GM12878 (cell line): ENCODE measurements at regions of chr1 and their contacts with region 1.

Region 1: GRCh38 chr1:154870115-154870571 is at the start of gene KCNN3:
- DNase-seq: peak; percentile 82
- ATAC-seq: peak; percentile 89
- H3K4me3 ChIP-seq: peak within 1 kb of the TSS; percentile 88
- H3K27ac ChIP-seq: peak within 1 kb of the TSS; percentile 46
- H3K4me1 ChIP-seq: peaks cover 58% of the 10 kb centered on the region
- H3K27me3 ChIP-seq: no peaks in the 10 kb centered on the region
- CTCF ChIP-seq: no peak
- EP300 ChIP-seq: no peak
- POLR2A ChIP-seq: peak; percentile 89
- RAD21 ChIP-seq: no peak
- polyA plus RNA-seq, gene KCNN3: 3.5 to 6.4 TPM

Region 2: DNA sequence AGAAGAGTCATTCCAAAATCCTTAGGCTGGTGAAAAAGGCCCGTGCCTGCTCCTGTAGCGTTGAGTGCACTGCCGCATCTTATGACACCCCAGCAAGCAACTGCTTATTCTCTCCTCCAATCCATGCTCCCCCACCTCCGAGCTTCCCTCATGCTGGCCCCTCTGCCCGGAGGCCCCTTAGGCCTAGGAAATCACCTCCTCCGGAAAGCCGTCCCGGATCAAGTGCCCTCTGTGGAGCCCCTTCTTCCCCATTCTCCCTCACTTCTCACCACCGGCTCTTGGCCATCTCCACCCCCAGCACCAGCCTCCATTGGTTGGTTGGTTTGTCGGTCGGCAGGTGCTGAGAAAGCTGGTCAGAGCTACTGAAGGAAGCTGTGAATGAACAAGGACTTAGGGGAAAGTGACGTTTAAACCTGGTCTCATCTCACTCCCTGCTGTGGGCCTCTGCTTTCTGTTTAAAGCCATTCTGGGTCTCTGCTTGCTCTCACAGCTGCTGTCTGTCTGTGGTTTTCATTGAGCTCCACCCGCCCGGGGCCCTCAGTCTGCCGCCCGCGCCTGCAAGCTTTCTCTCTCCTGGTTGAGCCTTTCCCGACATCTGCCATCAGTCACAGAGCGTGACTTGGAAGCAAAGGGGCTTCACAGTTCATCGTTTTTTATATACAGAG is 122.3 kb before region 1 on chr1:
- CTCF ChIA-PET with region 1: interaction called, 6 read pairs
- POLR2A ChIA-PET with region 1: interaction called, 8 read pairs
- RAD21 ChIA-PET with region 1: interaction called, 13 read pairs
- SMC1A ChIA-PET with region 1: interaction called, 7 read pairs
- in situ Hi-C with region 1: no loop called
- intact Hi-C with region 1: loop called (anchors 5 kb)
- DNase-seq: peak; percentile 66
- ATAC-seq: peak; percentile 89
- H3K4me3 ChIP-seq: peak overlapping the region; percentile 34; the same call in 1 of the 2 replicates
- H3K27ac ChIP-seq: peak overlapping the region; percentile 67
- H3K4me1 ChIP-seq: peaks cover 48% of the 10 kb centered on the region
- H3K27me3 ChIP-seq: no peaks in the 10 kb centered on the region
- CTCF ChIP-seq: no peak
- EP300 ChIP-seq: no peak
- POLR2A ChIP-seq: no peak
- RAD21 ChIP-seq: no peak

Region 3: GRCh38 chr1:154809436-154810413 is 60.4 kb before region 1 on chr1:
- CTCF ChIA-PET with region 1: interaction called, 11 read pairs
- POLR2A ChIA-PET with region 1: interaction called, 26 read pairs
- RAD21 ChIA-PET with region 1: interaction called, 66 read pairs
- SMC1A ChIA-PET with region 1: interaction called, 17 read pairs
- in situ Hi-C with region 1: no loop called
- intact Hi-C with region 1: no loop called
- DNase-seq: no peak
- ATAC-seq: peak; percentile 21
- H3K4me3 ChIP-seq: no peak overlapping the region
- H3K27ac ChIP-seq: peak overlapping the region; percentile 51
- H3K4me1 ChIP-seq: peaks cover 49% of the 10 kb centered on the region
- H3K27me3 ChIP-seq: no peaks in the 10 kb centered on the region
- CTCF ChIP-seq: no peak
- EP300 ChIP-seq: no peak
- POLR2A ChIP-seq: no peak
- RAD21 ChIP-seq: no peak

Region 4: DNA sequence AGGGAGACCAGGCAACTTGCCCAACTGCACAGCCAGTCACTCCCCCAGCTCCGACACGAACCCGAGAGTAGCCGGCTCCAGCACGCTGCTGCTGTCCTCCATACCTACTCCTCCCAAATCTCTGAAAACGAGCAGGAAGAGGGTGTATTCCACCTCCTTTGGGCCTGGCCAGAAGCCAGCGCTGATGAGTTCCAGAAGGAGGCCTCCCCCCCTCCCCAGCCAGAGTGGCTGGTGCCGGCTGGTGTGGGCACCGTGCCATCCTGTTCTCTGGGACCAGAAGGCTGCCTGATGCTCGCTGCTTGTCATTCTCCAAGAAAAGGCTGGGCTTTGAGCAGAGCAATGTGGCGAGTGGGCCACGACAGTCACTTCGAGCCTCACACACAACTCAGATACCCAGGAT is 22.3 kb before region 1 on chr1:
- CTCF ChIA-PET with region 1: interaction called, 13 read pairs
- POLR2A ChIA-PET with region 1: interaction called, 204 read pairs
- RAD21 ChIA-PET with region 1: interaction called, 254 read pairs
- SMC1A ChIA-PET with region 1: interaction called, 24 read pairs
- in situ Hi-C with region 1: no loop called
- intact Hi-C with region 1: no loop called
- DNase-seq: no peak
- ATAC-seq: no peak
- H3K4me3 ChIP-seq: no peak overlapping the region
- H3K27ac ChIP-seq: no peak overlapping the region
- H3K4me1 ChIP-seq: peaks cover 52% of the 10 kb centered on the region
- H3K27me3 ChIP-seq: no peaks in the 10 kb centered on the region
- CTCF ChIP-seq: no peak
- EP300 ChIP-seq: no peak
- POLR2A ChIP-seq: no peak
- RAD21 ChIP-seq: no peak

Region 5: GRCh38 chr1:154943649-154944400 is 73.7 kb after region 1 on chr1:
- CTCF ChIA-PET with region 1: interaction called, 8 read pairs
- POLR2A ChIA-PET with region 1: interaction called, 8 read pairs
- RAD21 ChIA-PET with region 1: interaction called, 15 read pairs
- SMC1A ChIA-PET with region 1: no interaction called
- in situ Hi-C with region 1: no loop called
- intact Hi-C with region 1: no loop called
- DNase-seq: no peak
- ATAC-seq: peak; percentile 37
- H3K4me3 ChIP-seq: peak overlapping the region; percentile 77
- H3K27ac ChIP-seq: peak overlapping the region; percentile 100
- H3K4me1 ChIP-seq: peaks cover 63% of the 10 kb centered on the region
- H3K27me3 ChIP-seq: no peaks in the 10 kb centered on the region
- CTCF ChIP-seq: peak; percentile 88 to 90 (median 89)
- EP300 ChIP-seq: no peak
- POLR2A ChIP-seq: no peak
- RAD21 ChIP-seq: peak; percentile 71